ENCODE measurements at regions of chr17 and their contacts with region 1.

Region 1: GRCh38 chr17:28357061-28357900 is at the start of gene POLDIP2:
- DNase-seq: peak; percentile 93
- H3K4me3 ChIP-seq: peak within 1 kb of the TSS; percentile 90 to 100
- H3K27ac ChIP-seq: peak within 1 kb of the TSS; percentile 82
- H3K4me1 ChIP-seq: peaks cover 5% of the 10 kb centered on the region
- H3K27me3 ChIP-seq: no peaks in the 10 kb centered on the region
- CTCF ChIP-seq: peak in 3 of 4 experiments; percentile 11 to 48 (median 42)
- POLR2A ChIP-seq: peak; percentile 76
- total RNA-seq, gene POLDIP2: 94.4 to 140 TPM

Region 2: DNA sequence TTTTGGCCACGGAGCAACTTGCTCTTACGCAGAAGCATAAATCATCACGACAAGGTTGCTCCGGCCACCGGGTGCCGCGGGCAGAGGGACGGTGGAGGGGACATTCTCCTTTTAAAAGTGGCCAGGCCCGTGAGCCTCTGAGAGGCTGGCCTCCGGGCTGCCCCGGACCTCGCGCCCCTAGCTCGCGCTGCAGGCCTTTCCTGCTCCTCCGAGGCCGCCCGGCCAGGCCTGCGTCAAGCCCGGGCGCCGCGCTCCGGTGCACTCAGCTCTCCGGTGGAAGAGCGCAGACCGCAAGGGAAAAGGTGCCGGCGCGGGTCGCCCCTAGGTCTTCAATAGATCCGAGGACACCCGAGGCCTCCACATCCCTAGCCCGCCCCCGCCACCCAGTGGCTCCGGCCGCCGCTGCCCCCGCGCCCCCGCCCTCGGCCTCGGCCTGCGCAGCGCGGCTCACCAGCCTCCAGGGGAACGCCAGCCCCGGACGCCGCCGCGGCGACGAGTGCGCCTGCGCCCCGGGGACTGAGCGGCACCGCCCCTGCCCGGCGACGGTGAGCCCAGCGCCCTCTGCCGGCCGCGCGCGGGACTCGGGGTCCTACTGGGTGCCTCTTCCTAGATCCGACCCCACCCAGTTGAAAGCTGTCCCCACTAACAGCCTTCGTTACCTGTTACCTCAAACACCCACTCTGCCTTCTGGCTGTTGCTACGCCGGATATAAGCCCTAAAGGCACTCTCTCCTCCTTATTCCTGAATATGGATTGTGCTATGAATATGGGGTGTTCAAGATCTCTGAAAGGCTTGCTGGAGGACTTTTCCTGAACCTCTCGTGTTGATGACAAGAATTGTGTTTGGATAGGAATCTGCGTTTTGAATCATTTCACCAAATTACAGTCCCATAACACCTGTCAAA is 464.2 kb before region 1 on chr17 and contains the start of gene LYRM9:
- intact Hi-C with region 1: loop called (anchors 10 kb)
- DNase-seq: peak; percentile 86
- H3K4me3 ChIP-seq: peak within 1 kb of the TSS; percentile 61 to 83
- H3K27ac ChIP-seq: peak within 1 kb of the TSS; percentile 71 to 77
- H3K4me1 ChIP-seq: no peaks in the 10 kb centered on the region
- H3K27me3 ChIP-seq: no peaks in the 10 kb centered on the region
- CTCF ChIP-seq: peak; percentile 83 to 97 (median 90)
- POLR2A ChIP-seq: peak; percentile 12
- total RNA-seq, gene LYRM9: 26.1 to 30.9 TPM

Region 3: DNA sequence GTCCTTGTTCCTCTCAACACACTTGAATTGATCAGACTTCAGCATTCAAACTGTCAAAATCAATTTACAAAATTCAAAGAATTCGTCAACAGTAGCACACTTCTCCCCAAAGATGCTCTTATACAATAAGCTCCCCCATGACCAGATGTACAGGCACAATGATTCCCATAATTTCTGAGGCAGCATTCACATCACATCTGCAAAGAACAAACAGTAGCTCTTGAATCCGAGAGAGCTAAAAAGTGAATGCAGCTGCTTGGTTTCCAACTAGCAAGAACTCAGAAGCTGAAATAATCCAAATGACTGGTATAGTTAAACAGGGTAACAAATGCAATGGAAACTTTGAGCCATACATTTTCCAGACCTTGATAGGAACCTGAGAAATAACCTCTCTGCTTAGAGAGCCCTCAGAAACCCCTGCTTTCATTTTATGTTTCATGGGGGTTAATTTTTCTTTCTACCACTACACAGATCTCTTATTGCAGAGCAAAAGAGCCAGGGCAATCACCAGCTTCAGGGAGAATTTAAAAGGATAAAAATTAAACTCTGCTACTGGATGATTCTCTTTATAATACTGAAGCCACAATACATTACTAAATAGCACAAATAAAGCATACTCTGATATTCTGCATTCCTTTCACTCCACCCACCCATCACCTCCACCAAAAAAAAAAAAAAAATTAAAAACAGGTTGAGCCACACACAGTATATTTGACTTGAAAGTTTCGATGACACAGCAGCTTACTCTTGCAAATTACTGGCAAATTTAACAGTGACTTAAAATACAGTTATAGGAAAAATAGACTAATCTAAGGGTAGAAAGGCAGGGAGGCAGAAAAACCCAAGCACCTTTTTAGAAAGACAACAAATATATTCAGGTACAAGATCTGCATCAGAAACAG is 61.4 kb before region 1 on chr17:
- intact Hi-C with region 1: no loop called
- DNase-seq: no peak
- H3K4me3 ChIP-seq: no peak overlapping the region
- H3K27ac ChIP-seq: no peak overlapping the region
- H3K4me1 ChIP-seq: no peaks in the 10 kb centered on the region
- H3K27me3 ChIP-seq: no peaks in the 10 kb centered on the region
- CTCF ChIP-seq: no peak
- POLR2A ChIP-seq: no peak

Region 4: DNA sequence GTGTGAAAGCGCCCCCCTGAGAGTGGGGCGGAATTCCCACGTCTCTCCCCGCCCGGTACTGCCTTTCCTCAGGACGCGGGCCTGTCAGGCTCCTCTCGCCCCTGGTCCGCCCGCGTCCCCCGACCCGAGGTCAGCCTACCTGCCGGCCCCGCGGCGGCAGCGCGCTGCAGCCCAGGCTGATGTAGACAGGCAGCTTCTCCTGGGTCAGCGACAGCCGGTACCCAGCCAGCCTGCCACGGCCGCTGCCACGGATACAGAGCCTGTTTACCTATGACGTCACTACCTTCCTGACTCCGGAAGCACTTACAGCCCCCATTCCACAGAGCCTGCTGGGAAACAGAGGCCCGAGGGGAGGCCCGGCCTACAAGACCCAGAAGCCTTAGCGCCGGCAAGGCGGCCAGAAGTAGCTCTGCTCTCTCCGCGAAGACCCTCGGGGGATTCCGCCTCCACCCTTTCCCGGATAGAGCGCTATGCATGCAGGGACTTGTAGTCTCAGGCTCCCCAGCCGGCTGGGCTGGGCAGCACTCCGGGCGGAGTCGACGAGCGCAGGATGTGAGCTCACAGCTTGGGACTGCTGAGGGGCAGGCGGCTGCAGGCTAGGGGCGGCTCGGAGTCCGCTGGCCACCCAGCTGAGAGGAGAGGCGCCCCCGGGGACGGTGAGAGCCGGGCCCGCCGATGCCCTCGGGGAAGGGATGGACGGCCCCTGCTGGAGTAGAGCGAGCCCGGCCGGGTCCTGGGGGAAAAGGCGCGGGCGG is 21.9 kb before region 1 on chr17 and contains the starts of genes IFT20 and TNFAIP1:
- intact Hi-C with region 1: loop called (anchors 1 kb)
- DNase-seq: peak; percentile 99
- H3K4me3 ChIP-seq: peak within 1 kb of the TSS; percentile 88 to 94
- H3K27ac ChIP-seq: peak within 1 kb of the TSS; percentile 87 to 88
- H3K4me1 ChIP-seq: peaks cover 12% of the 10 kb centered on the region
- H3K27me3 ChIP-seq: no peaks in the 10 kb centered on the region
- CTCF ChIP-seq: peak in 1 of 4 experiments; percentile 24
- POLR2A ChIP-seq: peak; percentile 95
- total RNA-seq, gene IFT20: 45.2 to 55.0 TPM
- total RNA-seq, gene TNFAIP1: 32.2 to 63.1 TPM